ENCODE measurements at regions of chr11 and their contacts with region 1.

Region 1: GRCh38 chr11:120929664-120930154 is 94.2 kb upstream of the TBCEL start:
- DNase-seq: peak; percentile 10
- H3K4me3 ChIP-seq: no peak overlapping the region
- H3K27ac ChIP-seq: no peak overlapping the region
- H3K4me1 ChIP-seq: no peaks in the 10 kb centered on the region
- H3K27me3 ChIP-seq: no peaks in the 10 kb centered on the region
- CTCF ChIP-seq: peak; percentile 26 to 47 (median 26)
- POLR2A ChIP-seq: no peak

Region 2: GRCh38 chr11:120527111-120527761 is 402.5 kb before region 1 on chr11:
- intact Hi-C with region 1: no loop called
- DNase-seq: no peak
- H3K4me3 ChIP-seq: no peak overlapping the region
- H3K27ac ChIP-seq: no peak overlapping the region
- H3K4me1 ChIP-seq: peaks cover 10% of the 10 kb centered on the region
- H3K27me3 ChIP-seq: peaks cover 7% of the 10 kb centered on the region
- CTCF ChIP-seq: no peak
- POLR2A ChIP-seq: no peak

Region 3: GRCh38 chr11:121194731-121195596 is 265.3 kb after region 1 on chr11:
- intact Hi-C with region 1: loop called (anchors 10 kb)
- DNase-seq: peak; percentile 74
- H3K4me3 ChIP-seq: no peak overlapping the region
- H3K27ac ChIP-seq: no peak overlapping the region
- H3K4me1 ChIP-seq: no peaks in the 10 kb centered on the region
- H3K27me3 ChIP-seq: no peaks in the 10 kb centered on the region
- CTCF ChIP-seq: peak; percentile 55 to 95 (median 82)
- POLR2A ChIP-seq: no peak